ENCODE measurements at regions of chr11 and their contacts with region 1.

Region 1: GRCh38 chr11:133078591-133079404 is 453.5 kb downstream of the OPCML start:
- DNase-seq: peak; percentile 21
- H3K27ac ChIP-seq: no peak overlapping the region
- CTCF ChIP-seq: peak; percentile 74

Region 2: DNA sequence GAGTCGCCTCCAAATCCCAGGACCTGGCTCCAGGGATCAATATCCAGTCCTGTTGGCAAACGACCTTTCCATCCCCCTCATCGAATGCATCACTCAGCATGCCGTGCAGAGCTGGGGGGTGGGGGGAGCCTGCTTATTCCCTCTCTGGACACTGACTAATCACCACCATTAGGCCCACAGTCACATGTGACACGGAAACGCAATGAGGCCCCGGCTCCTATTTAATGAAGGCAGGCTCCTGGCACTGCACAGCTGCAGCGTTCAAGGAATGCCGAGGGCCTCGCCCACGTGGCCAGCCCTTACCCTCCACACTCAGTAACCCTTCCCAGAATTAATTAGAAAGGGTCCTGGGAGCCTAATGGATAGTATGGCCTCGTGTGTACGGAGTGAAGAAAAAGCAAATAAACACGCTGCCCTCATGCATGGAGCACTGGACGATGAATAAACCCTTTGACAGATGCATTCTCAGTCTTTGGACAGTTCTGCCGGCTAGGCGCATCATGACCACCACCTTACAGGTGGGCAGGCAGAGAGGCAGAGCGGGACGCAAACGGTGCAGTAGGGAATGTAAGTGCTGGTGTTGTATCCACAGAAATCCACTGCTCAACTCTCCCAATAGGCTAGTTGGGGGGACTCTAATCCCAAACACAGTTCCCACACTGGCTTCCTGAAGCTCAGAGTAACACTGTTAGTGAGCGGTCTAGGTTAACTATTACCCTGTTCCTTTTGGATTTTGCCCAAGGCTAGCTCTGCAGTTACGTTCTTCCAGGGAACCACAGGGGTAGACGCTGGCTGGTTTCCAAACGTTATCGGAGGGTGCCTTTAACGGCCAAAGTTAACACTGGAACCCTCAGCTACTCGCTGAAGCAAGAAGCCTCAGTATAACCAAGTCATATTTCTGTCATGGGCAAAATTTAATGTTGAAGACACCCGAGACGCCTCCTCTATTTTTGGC is 36.6 kb before region 1 on chr11:
- CTCF ChIA-PET with region 1: no interaction called
- POLR2A ChIA-PET with region 1: no interaction called
- DNase-seq: no peak
- H3K27ac ChIP-seq: no peak overlapping the region
- CTCF ChIP-seq: no peak

Region 3: DNA sequence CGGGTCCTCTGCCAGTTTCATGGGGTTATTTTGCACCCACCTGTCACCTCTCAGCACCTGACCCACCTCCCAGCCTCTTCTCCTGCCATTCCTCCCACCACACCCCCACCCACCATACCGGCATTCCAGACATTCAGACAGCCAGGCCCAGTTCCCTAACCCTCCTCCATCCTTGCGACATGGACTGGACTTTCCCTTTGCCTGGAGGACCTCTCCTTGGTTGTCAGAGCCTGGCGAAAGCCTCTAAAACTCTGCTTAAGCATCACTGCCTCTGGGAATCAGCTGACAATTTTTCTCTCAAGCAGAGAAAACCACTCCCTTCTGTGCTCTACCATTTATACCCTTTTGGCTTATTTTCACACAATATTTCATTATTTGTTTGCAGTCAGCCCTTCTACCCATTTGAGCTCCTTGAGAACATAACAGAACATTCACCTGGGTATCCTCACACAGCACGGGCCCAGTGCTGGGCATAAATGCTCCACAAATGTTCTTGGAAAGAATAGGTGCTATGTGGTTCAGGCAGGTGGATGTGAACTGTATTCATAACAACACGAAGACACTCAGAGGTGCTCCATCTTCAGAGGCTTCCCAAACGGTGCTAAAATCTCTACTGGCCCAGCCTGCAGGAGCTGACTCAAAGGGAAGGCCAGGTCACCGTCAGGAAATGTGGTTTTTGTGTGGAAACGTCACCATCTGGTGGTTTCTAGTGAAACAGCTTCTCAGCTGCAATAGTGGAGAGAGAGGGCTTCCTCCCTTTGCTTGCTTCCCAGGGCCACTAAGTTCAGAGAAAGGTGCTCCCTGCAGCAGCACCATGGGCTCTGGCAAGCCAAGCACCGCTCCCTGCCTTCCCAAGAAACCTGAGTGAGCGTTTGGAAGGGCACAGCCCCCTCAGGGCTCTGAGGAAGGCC is 756.1 kb after region 1 on chr11:
- CTCF ChIA-PET with region 1: interaction called, 29 read pairs
- POLR2A ChIA-PET with region 1: no interaction called
- DNase-seq: peak; percentile 58
- H3K27ac ChIP-seq: no peak overlapping the region
- CTCF ChIP-seq: peak; percentile 43